ENCODE measurements at regions of chr2 and their contacts with region 1.

Region 1: GRCh38 chr2:109128048-109128465 is 948 bp upstream of the SH3RF3 start:
- DNase-seq: peak; percentile 72 to 83
- H3K4me3 ChIP-seq: peak overlapping the region; percentile 25 to 59
- H3K27ac ChIP-seq: peak overlapping the region; percentile 54 to 69
- H3K4me1 ChIP-seq: no peaks in the 10 kb centered on the region
- H3K27me3 ChIP-seq: no peaks in the 10 kb centered on the region
- CTCF ChIP-seq: peak; percentile 74 to 95 (median 90)
- POLR2A ChIP-seq: peak in 1 of 2 donors; percentile 31

Region 2: GRCh38 chr2:109396202-109397180 is 268.4 kb after region 1 on chr2:
- intact Hi-C with region 1: loop called (anchors 10 kb)
- DNase-seq: no peak
- H3K4me3 ChIP-seq: no peak overlapping the region
- H3K27ac ChIP-seq: no peak overlapping the region
- H3K4me1 ChIP-seq: no peaks in the 10 kb centered on the region
- H3K27me3 ChIP-seq: no peaks in the 10 kb centered on the region
- CTCF ChIP-seq: no peak
- POLR2A ChIP-seq: no peak

Region 3: GRCh38 chr2:109510136-109511028 is 382.3 kb after region 1 on chr2:
- intact Hi-C with region 1: loop called (anchors 5 kb)
- DNase-seq: peak; percentile 74 to 75
- H3K4me3 ChIP-seq: no peak overlapping the region
- H3K27ac ChIP-seq: no peak overlapping the region
- H3K4me1 ChIP-seq: peaks cover 0 to 5% of the 10 kb centered on the region in 2 donors
- H3K27me3 ChIP-seq: no peaks in the 10 kb centered on the region
- CTCF ChIP-seq: peak; percentile 85 to 92 (median 90)
- POLR2A ChIP-seq: no peak

Region 4: DNA sequence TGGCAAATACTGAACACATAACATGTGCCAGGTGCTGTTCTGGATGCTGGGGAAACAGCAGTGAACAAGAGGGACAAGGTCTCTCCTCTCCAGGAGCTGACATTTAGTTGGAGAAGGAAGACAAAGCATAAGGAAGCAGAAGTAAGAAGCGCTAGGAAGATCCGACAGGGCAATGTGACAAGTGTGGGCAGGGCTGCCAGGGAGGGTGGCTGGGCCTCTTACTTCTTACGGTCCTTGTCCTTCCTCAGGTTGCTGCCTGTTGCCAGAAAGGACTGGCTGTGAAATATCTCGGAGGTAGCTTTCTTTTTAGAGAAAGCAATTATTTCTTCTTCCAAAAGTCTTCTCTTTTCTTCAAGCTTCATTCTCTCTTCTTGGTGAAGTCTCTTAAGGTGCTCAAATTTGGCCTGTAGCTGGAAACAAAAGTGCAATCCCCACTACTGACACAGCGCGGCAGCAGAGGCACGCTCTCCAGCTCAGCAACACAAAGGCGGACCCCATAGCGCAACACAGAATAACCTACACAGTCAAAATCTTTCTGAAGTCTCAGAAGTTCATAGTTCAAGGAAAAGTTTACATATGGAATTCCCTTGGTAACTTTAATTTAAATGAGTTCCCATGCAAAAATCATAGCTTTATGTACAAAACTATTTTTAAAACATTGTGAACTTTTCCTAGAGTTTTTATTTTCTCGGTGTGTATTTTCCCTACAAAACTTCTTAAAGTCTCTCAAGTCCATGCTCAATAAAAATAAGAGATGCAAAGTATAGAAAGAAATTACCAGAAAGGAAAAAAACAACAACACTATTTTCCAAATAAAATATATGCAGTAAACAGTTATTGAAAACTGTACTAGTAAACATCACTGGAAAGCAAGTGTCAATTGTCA is 418.0 kb after region 1 on chr2:
- intact Hi-C with region 1: no loop called
- DNase-seq: peak; percentile 55 to 79
- H3K4me3 ChIP-seq: no peak overlapping the region
- H3K27ac ChIP-seq: no peak overlapping the region
- H3K4me1 ChIP-seq: no peaks in the 10 kb centered on the region
- H3K27me3 ChIP-seq: no peaks in the 10 kb centered on the region
- CTCF ChIP-seq: peak; percentile 84 to 95 (median 93)
- POLR2A ChIP-seq: no peak

Measured in uterus (tissue), 4 donors.